ENCODE measurements at regions of chr1 and their contacts with region 1.

Region 1: DNA sequence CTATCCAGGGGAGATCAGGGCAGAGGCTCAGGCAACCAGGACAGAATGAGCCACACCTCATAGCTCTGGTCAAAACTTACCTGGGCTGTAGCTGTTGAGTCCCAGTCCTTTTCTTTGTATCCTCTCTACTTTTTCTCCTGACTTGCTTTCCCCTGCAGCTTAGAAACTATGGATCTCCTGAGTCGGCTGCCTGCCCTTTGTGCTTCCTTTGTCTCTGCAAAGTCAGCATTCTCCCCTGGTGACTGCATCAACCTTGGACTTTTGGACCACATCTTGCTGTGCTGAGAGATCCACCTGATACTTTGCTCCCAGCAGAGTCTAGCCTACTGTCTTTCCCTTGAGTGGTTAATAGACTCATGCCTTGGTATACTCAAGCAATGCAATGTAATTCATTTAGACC is 353.3 kb downstream of the SIPA1L2 start:
- DNase-seq: no peak
- ATAC-seq: no peak
- H3K4me3 ChIP-seq: no peak overlapping the region
- H3K4me3 Mint-ChIP-seq: no peak overlapping the region
- H3K27ac ChIP-seq: no peak overlapping the region
- H3K27ac Mint-ChIP-seq: no peak overlapping the region
- H3K4me1 ChIP-seq: no peaks in the 10 kb centered on the region
- H3K4me1 Mint-ChIP-seq: no peaks in the 10 kb centered on the region
- H3K27me3 ChIP-seq: peaks cover 0 to 5% of the 10 kb centered on the region in 2 experiments
- H3K27me3 Mint-ChIP-seq: peaks cover 15 to 19% of the 10 kb centered on the region in 2 donors

Region 2: GRCh38 chr1:232138044-232138443 is 138.6 kb before region 1 on chr1:
- CTCF ChIA-PET with region 1: no interaction called
- POLR2A ChIA-PET with region 1: interaction called in 1 of 2 experiments, 10 read pairs
- DNase-seq: no peak
- ATAC-seq: no peak
- H3K4me3 ChIP-seq: no peak overlapping the region
- H3K4me3 Mint-ChIP-seq: no peak overlapping the region
- H3K27ac ChIP-seq: no peak overlapping the region
- H3K27ac Mint-ChIP-seq: no peak overlapping the region
- H3K4me1 ChIP-seq: no peaks in the 10 kb centered on the region
- H3K4me1 Mint-ChIP-seq: no peaks in the 10 kb centered on the region
- H3K27me3 ChIP-seq: peaks cover 0 to 3% of the 10 kb centered on the region in 2 experiments
- H3K27me3 Mint-ChIP-seq: peaks cover 2 to 14% of the 10 kb centered on the region in 2 donors

Region 3: GRCh38 chr1:232287676-232288569 is 11.3 kb after region 1 on chr1:
- CTCF ChIA-PET with region 1: no interaction called
- POLR2A ChIA-PET with region 1: no interaction called
- DNase-seq: no peak
- ATAC-seq: no peak
- H3K4me3 ChIP-seq: no peak overlapping the region
- H3K4me3 Mint-ChIP-seq: no peak overlapping the region
- H3K27ac ChIP-seq: no peak overlapping the region
- H3K27ac Mint-ChIP-seq: no peak overlapping the region
- H3K4me1 ChIP-seq: no peaks in the 10 kb centered on the region
- H3K4me1 Mint-ChIP-seq: peaks cover 0 to 6% (median 0%) of the 10 kb centered on the region in 3 donors
- H3K27me3 ChIP-seq: peaks cover 0 to 5% of the 10 kb centered on the region in 2 experiments
- H3K27me3 Mint-ChIP-seq: peaks cover 0 to 33% of the 10 kb centered on the region in 2 donors